A549 (cell line): ENCODE measurements at regions of chr3 and their contacts with region 1.

Region 1: GRCh38 chr3:195909644-195910508 is 1.5 kb upstream of the TNK2 start:
- DNase-seq: peak; percentile 66 to 82
- ATAC-seq: peak; percentile 70 to 80
- H3K4me3 ChIP-seq: peak overlapping the region; percentile 90
- H3K27ac ChIP-seq: peak overlapping the region; percentile 86 to 97
- H3K4me1 ChIP-seq: peaks cover 39% of the 10 kb centered on the region
- CTCF ChIP-seq: no peak
- EP300 ChIP-seq: no peak
- POLR2A ChIP-seq: peak; percentile 64
- RAD21 ChIP-seq: no peak

Region 2: DNA sequence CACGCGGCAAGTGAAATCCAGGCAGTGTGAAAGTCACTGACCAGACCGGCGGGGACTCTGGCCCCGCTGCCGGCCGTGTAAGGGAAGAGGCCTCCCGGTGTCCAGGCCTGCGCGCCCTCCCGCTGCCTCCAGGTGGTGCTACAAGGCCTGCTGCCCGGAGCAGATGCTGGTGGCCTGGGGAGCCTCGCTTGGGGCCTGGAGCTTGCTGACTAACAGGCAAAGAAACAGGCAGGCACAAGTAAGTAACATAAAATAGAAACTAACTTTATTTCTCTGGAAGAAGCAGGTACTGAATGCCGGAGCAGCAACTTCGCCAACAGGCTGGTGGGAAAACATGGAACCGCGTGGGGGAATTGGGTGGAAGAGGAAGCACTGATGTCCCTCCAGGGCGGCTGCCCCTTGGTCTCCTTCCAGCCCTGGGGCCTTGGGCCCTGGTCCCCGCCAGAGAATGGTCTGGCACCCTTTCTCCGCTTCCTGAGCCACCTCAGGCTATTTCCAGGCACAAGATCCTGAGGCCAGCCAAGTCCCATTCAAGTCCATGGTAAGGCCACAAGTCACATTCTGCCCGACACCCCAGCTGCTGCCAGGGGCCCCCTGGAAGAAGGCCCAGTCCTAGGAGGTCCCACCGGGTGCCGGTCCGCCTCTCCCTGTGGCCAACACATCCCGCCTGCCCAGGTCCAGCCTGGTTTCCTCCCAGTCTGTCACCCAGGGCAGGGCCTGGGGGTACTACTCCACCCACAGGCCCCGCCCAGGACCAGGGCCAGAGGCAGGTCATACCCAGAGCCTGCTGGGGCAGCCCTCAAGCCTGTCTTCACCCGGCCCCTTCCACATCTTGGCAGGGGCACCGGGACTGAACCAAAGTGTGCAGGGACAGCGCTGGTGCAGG is 46.5 kb before region 1 on chr3:
- CTCF ChIA-PET with region 1: interaction called, 17 read pairs
- POLR2A ChIA-PET with region 1: no interaction called
- DNase-seq: peak; percentile 53 to 79
- ATAC-seq: peak; percentile 96 to 99
- H3K4me3 ChIP-seq: no peak overlapping the region
- H3K27ac ChIP-seq: no peak overlapping the region
- H3K4me1 ChIP-seq: peaks cover 4% of the 10 kb centered on the region; the same call in 1 of the 3 replicates
- CTCF ChIP-seq: peak; percentile 74
- EP300 ChIP-seq: no peak
- POLR2A ChIP-seq: no peak
- RAD21 ChIP-seq: peak; percentile 69 to 73

Region 3: GRCh38 chr3:195870442-195870841 is 39.4 kb before region 1 on chr3:
- CTCF ChIA-PET with region 1: interaction called, 12 read pairs
- POLR2A ChIA-PET with region 1: no interaction called
- DNase-seq: peak in 1 of 2 experiments; percentile 28
- ATAC-seq: peak; percentile 53 to 74; a peak in 5 of 6 replicates
- H3K4me3 ChIP-seq: no peak overlapping the region
- H3K27ac ChIP-seq: peak overlapping the region in 1 of 2 experiments; percentile 57; a peak in 2 of 6 replicates
- H3K4me1 ChIP-seq: peaks cover 13% of the 10 kb centered on the region; the same call in 1 of the 3 replicates
- CTCF ChIP-seq: no peak
- EP300 ChIP-seq: no peak
- POLR2A ChIP-seq: no peak
- RAD21 ChIP-seq: no peak

Region 4: DNA sequence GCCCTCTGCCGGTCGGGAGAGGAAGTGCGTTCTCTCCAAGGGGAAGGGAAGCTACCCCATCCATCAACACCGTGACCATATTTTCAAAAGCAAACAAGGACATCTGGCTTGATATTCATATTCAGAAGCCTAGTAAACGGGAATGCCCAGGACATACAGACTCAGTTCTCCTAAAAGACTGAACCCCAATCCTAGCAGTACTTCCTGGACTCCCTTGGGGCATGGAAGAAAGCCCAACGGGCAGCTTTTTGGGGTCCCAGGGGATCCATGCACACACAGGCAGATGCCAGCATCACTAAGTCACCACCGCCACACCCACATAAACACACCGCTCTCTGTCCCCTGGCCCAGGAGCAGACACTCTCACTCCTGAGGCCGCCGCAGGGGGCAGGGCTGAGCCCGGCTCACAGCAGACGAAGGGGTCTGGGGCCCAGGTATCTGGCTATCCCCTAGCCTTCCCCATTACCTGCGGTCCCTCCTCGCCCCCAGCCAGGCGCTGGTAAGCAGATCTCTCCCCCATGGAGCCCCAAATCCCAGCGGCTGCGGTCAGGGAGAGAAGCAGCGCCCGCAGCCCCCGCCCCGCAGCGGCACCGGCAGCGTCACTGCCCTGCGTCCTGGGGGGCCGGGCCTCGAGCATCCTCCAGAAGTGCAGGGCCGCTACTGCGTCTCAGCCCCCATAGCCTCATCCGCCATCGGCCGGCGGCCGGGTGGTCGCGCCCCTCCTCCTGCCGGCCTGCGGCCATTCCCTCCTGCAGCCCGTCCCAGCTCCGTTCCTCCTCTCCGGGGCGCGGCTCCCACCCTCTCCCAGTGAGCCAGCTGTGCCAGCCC is 14.9 kb before region 1 on chr3:
- CTCF ChIA-PET with region 1: interaction called, 207 read pairs
- POLR2A ChIA-PET with region 1: interaction called, 3 read pairs
- DNase-seq: peak; percentile 78 to 79
- ATAC-seq: peak; percentile 83 to 84
- H3K4me3 ChIP-seq: peak overlapping the region; percentile 77
- H3K27ac ChIP-seq: peak overlapping the region; percentile 91 to 96
- H3K4me1 ChIP-seq: peaks cover 18% of the 10 kb centered on the region
- CTCF ChIP-seq: peak; percentile 75
- EP300 ChIP-seq: no peak
- POLR2A ChIP-seq: no peak
- RAD21 ChIP-seq: peak; percentile 77 to 81

Region 5: DNA sequence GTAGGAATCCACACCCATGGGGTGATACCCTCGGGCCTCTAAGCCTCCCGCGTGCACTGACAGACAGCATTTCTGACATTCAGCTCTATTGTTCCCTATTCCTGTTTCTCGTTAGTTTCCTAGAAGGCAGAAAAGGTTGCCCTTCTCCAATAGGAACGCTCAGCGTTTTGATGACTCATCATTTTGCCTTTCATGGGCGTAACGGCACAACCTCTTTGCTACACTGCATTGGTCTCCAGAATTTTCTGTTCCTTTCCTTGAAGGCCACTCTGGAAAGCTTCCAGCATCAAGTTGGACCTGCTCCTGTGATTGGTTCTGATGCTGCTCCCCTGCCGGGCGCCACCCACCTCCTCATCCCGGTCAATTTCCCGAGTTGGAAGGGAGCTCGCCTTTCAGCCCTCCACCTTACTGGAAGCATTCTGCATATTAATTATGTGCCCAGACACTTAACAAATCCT is 11.5 kb after region 1 on chr3:
- CTCF ChIA-PET with region 1: interaction called, 22 read pairs
- POLR2A ChIA-PET with region 1: no interaction called
- DNase-seq: no peak
- ATAC-seq: no peak
- H3K4me3 ChIP-seq: no peak overlapping the region
- H3K27ac ChIP-seq: no peak overlapping the region
- H3K4me1 ChIP-seq: no peaks in the 10 kb centered on the region
- CTCF ChIP-seq: no peak
- EP300 ChIP-seq: no peak
- POLR2A ChIP-seq: no peak
- RAD21 ChIP-seq: no peak

Region 6: DNA sequence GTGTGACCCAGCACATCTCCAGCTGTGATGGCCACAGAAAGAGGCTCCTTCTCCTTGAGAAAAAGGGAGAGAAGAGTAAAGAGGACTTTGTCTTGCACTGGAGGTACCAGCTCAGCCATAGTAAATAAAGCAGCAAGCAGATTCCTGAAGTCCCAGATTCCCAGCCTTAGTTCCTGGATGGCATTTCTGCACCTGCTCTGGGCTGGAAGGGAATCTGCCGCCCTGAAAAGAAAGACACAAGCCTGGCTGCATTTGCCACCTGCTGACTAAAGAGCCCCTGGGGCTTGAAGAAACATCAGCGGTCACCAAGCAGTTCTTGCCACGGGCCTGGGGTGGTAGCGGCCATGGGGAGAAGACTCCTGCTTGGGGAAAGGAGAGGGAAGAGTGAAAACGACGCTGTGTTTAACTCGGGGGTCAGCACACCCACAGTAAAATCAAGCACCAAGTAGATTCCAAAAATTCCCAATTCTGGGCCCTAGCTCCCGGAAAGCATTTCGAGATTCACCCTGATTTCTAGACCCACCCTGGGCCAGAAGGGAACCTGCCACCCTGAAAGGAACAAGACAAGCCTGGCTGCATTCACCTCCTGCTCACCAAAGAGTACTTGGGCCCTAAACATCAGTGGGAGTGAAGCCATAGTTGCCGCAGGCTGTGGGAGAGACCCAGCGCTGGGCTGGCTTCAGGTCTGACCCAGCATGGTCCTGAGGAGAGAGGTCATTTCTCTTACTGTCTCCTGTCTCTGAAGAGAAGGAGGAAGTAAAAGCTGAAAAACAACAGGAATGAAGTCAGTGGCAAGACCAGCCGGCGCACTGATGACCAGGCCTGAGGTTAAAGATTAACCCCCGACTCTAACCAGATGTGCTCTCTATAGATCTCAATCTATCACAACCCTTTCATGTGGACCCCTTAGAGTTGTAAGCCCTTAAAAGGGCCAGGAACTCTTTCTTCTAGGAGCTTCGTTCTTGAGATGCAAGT is 22.9 kb after region 1 on chr3:
- CTCF ChIA-PET with region 1: interaction called, 12 read pairs
- POLR2A ChIA-PET with region 1: no interaction called
- DNase-seq: peak in 1 of 2 experiments; percentile 54
- ATAC-seq: peak; percentile 39 to 78; a peak in 3 of 6 replicates
- H3K4me3 ChIP-seq: no peak overlapping the region
- H3K27ac ChIP-seq: peak overlapping the region; percentile 61 to 75
- H3K4me1 ChIP-seq: peaks cover 19% of the 10 kb centered on the region
- CTCF ChIP-seq: no peak
- EP300 ChIP-seq: no peak
- POLR2A ChIP-seq: no peak
- RAD21 ChIP-seq: no peak